ENCODE measurements at regions of chr12 and their contacts with region 1.

Region 1: DNA sequence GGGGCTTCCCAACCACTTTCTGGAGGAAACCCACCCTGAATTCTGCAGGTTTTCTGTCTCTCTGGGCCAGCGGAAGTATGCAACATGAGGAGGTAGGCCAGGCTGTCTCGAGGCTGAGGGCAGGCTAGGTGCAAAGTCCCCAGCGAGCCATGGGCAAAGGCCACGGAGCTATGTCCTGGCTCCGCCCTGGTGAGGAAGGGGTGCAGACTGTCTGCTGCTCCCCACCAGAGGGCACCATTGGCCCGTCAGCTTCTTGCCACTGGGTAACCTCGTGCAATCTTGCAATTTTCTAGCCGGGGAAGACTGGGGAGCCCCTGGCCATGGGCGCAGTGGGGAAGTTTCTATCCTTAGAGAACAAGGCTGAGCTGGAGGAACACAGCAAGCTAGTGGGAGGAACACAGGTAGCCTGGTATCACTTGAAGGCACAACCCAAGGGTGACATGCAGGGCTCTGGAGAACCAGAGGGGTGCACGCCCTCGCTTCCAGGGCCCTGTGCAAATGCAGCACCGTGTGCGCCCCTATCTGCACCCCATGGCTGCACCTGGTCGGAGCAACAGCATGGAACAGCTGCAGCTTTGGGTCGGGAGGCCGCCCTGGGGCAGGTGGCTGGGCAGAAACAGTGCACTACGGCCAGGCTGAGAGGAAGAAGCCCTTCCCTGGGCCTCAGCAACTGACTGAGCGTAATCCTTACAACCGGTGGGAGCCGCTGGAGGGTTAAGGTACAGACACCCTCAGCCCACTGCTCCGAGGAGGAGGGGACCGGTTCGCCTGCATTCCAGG is 27.6 kb upstream of the RPLP0 start:
- DNase-seq: peak; percentile 84
- H3K4me3 Mint-ChIP-seq: peak overlapping the region; percentile 50
- H3K27ac Mint-ChIP-seq: no peak overlapping the region
- H3K4me1 Mint-ChIP-seq: peaks cover 62% of the 10 kb centered on the region
- H3K27me3 Mint-ChIP-seq: no peaks in the 10 kb centered on the region
- CTCF ChIP-seq: peak; percentile 90

Region 2: DNA sequence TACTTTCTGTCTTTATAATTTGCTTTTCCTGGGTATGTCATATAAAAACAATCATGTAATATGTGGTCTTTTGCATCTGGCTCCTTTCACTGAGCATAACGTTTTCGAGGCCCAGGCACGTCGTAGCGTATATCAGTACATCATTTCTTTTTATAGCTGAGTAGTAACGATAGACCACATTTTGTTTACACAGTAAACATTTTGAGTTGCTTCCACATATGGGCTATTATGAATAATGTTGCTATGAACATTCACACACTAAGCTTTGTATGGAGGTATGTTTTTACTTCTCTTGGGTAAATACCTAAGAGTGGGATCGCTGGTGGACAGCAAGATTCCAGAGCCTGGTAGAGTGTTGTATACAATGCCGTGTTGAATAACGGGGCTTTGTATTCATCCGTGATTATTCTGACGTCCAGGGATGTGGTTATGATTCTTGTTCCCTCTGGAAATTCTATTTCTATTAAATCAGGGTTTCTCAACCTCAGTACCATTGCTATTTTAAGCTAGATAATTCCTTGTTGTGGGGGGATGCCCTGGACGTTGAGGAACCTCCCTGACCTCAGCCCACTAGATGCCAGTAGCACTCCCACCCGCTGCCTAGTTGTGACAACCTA is 312.5 kb before region 1 on chr12:
- CTCF ChIA-PET with region 1: no interaction called
- POLR2A ChIA-PET with region 1: no interaction called
- intact Hi-C with region 1: no loop called
- DNase-seq: no peak
- H3K4me3 Mint-ChIP-seq: no peak overlapping the region
- H3K27ac Mint-ChIP-seq: no peak overlapping the region
- H3K4me1 Mint-ChIP-seq: no peaks in the 10 kb centered on the region
- H3K27me3 Mint-ChIP-seq: no peaks in the 10 kb centered on the region
- CTCF ChIP-seq: no peak

Region 3: DNA sequence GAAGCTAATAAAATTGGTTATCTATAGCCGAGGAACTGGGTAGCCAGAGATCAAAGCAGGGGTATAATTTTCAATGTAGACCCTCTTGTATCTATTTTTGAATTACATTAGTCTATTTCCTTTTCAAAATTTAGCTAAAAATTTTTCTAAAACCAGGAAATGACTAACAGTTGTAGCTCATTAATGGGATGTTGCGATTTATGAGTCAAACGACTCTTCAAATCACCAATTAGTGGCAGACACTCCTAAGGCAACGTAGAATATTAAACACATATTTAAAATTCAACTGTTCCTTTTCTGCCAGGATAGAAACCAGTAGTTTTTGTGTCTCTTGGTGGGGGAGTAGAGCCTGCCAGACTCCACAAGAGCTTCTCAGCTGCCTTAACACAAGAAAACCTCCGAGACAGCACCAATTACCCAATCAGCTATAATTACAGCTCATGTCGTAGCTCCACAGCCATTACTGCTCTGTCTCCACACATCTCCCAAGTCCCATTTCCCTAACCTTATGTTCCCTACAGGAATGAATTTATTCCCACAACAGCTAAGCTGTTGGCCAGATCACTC is 60.9 kb before region 1 on chr12:
- CTCF ChIA-PET with region 1: no interaction called
- POLR2A ChIA-PET with region 1: no interaction called
- intact Hi-C with region 1: no loop called
- DNase-seq: no peak
- H3K4me3 Mint-ChIP-seq: no peak overlapping the region
- H3K27ac Mint-ChIP-seq: no peak overlapping the region
- H3K4me1 Mint-ChIP-seq: no peaks in the 10 kb centered on the region
- H3K27me3 Mint-ChIP-seq: no peaks in the 10 kb centered on the region
- CTCF ChIP-seq: no peak

Region 4: GRCh38 chr12:120194534-120195395 is 33.7 kb before region 1 on chr12 and contains the start of gene GCN1:
- CTCF ChIA-PET with region 1: interaction called, 86 read pairs
- POLR2A ChIA-PET with region 1: interaction called, 257 read pairs
- intact Hi-C with region 1: no loop called
- DNase-seq: peak; percentile 82
- H3K4me3 Mint-ChIP-seq: peak within 1 kb of the TSS; percentile 80
- H3K27ac Mint-ChIP-seq: peak within 1 kb of the TSS; percentile 89
- H3K4me1 Mint-ChIP-seq: peaks cover 23% of the 10 kb centered on the region
- H3K27me3 Mint-ChIP-seq: no peaks in the 10 kb centered on the region
- CTCF ChIP-seq: no peak
- total RNA-seq, gene GCN1: 116 and 117 TPM in 2 replicates

Region 5: DNA sequence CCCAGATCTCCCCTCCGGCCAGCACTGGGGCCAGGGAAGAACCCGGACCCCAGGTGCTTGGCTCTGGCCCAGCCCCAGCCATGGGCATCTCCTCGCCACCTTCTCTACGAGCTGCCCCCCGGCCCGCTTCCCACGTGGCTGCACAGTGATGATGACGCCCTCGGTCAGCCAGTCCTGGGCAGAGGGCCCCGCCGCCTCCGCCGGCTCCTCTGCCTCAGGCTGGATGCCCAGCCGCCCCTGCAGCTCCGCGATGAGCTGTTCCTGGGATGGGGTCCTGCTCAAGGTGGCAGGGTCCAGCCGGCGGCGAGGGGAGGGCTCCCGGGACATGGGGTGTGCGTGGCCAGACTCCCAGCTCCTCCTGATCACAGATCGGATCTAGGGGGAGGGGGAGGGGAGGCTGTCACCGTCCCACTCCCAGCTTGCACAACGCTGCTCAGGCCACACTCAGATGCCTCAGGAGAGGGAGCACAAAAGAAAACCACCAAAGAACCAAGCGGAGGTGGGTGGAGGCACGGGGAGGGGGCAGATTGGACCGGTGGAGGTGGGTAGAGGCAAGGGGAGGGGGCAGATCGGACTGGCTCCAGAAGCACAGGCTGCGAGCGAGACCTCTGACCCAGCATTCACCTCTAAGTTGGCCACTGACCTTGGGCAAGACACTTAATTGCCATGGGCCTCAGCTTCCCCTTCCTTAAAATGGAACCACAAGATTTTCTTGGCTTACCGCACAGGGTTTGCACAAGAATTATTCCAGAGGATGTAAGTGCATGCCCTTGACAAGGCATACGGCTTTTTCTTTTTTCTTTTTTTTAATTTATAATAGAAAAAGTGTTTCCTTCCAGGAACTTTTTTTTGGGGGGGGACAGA is 11.5 kb before region 1 on chr12:
- CTCF ChIA-PET with region 1: interaction called, 38 read pairs
- POLR2A ChIA-PET with region 1: interaction called, 5 read pairs
- intact Hi-C with region 1: no loop called
- DNase-seq: no peak
- H3K4me3 Mint-ChIP-seq: no peak overlapping the region
- H3K27ac Mint-ChIP-seq: no peak overlapping the region
- H3K4me1 Mint-ChIP-seq: no peaks in the 10 kb centered on the region
- H3K27me3 Mint-ChIP-seq: no peaks in the 10 kb centered on the region
- CTCF ChIP-seq: no peak

Region 6: DNA sequence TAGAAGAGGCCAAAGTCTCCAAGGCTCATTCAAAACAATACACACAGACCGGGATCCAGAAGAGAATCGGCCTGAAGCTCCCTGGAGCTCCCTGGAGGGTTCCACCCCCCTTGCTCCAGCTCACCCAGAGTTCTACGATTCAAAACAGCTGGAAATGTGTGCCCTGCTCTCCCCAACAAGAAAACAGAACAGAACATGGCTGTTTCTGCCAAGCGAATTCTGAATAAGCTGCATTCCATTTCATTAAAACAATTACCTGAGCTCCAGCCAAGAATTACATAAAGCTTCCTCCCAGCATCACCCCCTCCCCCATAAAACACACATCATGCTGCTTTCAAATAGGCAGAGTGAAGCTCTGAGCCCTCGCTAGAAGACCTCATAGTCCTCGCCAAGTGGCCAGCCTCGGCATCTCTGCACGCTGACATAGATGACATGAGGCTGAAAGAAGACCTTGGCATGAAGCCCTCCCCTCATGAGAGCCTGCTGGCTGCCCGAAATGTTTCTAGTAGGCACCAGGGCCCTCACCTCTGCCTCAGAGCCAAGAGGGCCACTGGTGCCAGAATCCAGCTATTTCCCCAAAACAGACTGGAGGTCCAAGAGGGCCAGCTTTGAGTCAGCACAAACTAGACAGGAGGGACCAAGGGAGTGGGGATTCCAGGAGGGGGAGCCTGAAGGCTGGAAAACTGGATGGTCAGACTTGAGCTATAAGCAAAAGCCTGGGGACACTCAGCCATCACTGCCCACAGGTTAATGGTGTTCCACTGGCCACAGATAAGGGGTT is 28.8 kb after region 1 on chr12:
- CTCF ChIA-PET with region 1: interaction called, 454 read pairs
- POLR2A ChIA-PET with region 1: interaction called, 549 read pairs
- intact Hi-C with region 1: loop called (anchors 1 kb)
- DNase-seq: peak; percentile 93
- H3K4me3 Mint-ChIP-seq: peak overlapping the region; percentile 30
- H3K27ac Mint-ChIP-seq: peak overlapping the region; percentile 75
- H3K4me1 Mint-ChIP-seq: peaks cover 62% of the 10 kb centered on the region
- H3K27me3 Mint-ChIP-seq: no peaks in the 10 kb centered on the region
- CTCF ChIP-seq: no peak

Region 7: DNA sequence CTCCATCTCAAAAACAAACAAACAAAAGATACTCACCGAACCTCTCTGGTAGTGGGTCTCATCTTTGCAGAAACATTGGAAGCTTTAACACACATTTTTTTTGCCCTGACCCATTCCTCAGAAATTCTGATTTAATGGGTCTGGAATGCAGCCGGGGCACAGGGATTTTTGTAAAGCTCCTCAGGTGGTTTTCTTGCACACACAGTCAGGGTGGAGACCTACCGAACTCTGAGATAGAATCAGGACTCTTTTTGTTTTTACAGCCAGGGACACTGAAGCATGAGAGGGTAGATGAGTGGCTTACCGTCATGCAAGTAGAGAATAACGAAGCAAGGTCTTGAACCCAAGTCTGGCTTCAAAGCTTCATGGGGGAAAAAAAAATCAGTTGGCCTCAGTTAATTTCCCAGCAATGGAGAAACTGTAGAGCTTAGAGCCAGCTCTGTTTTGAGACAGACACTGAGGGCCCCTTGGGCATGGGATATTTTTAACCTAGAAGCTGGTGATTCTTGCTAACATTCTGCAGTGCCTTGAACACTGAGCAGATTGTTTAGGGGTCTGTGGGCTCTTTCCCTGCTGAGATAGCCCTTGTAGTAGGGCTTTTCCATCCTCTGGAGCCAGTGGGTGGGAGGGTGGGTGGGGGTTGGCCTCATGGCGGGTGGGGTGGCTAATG is 58.5 kb after region 1 on chr12:
- CTCF ChIA-PET with region 1: interaction called, 10 read pairs
- POLR2A ChIA-PET with region 1: interaction called, 125 read pairs
- intact Hi-C with region 1: loop called (anchors 1 kb)
- DNase-seq: no peak
- H3K4me3 Mint-ChIP-seq: no peak overlapping the region
- H3K27ac Mint-ChIP-seq: no peak overlapping the region
- H3K4me1 Mint-ChIP-seq: peaks cover 16% of the 10 kb centered on the region
- H3K27me3 Mint-ChIP-seq: no peaks in the 10 kb centered on the region
- CTCF ChIP-seq: no peak

Region 8: GRCh38 chr12:120394483-120395367 is 166.2 kb after region 1 on chr12:
- CTCF ChIA-PET with region 1: no interaction called
- POLR2A ChIA-PET with region 1: no interaction called
- intact Hi-C with region 1: no loop called
- DNase-seq: no peak
- H3K4me3 Mint-ChIP-seq: no peak overlapping the region
- H3K27ac Mint-ChIP-seq: no peak overlapping the region
- H3K4me1 Mint-ChIP-seq: no peaks in the 10 kb centered on the region
- H3K27me3 Mint-ChIP-seq: peaks cover 22% of the 10 kb centered on the region
- CTCF ChIP-seq: no peak

Measured in MCF 10A (cell line).